ENCODE measurements at regions of chr11 and their contacts with region 1.

Region 1: DNA sequence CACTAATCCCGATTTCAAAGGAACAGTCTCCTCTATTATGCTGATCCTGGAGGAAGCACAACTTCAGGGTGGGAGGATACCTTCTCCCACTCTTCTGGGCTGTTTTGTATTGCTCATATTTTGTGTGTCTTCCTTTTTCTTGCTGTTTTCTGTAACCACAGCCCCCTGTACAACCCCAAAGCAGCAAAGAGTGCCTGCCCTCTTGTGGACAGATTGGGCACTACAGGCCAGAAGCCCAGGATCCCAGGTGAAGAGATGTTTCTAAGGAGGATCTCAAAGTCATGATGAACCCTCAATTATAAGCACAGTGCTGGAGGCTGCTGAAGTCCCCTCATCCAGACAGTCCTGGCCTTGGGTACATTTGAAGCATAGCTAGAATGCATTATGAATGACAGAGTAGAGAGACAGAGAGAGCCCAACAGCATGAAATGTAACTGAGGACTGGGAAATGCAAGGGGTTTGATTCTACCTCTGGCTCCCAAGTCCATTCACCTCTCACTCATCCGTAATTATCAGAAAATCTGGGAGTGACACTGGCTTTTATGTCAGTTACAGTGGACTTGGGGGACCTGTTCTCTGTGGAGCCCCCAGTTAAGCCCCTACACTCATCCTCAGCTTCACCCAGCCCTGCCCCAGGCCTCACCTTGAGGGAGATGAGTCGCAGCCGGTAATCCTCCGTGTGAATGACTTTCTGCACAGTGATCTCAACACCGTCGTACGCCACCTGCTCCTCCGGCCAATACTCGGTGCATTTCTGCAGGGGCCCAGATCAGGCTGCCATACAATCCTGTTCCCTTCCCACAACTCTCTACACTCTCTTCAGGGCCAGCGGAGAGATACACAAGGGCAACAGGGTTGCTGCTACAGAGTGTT is 6.2 kb upstream of the IGSF22 start:
- DNase-seq: peak; percentile 60 to 74
- H3K4me3 ChIP-seq: no peak overlapping the region
- H3K4me3 Mint-ChIP-seq: no peak overlapping the region
- H3K27ac Mint-ChIP-seq: no peak overlapping the region
- H3K4me1 ChIP-seq: 0 out of 2 replicates have a peak, but pooled peaks cover 17% of the 10 kb centered on the region
- H3K4me1 Mint-ChIP-seq: peaks cover 23% of the 10 kb centered on the region
- H3K27me3 ChIP-seq: no peaks in the 10 kb centered on the region
- H3K27me3 Mint-ChIP-seq: peaks cover 10% of the 10 kb centered on the region
- CTCF ChIP-seq: peak; percentile 91 to 98

Region 2: GRCh38 chr11:18757811-18758210 is 25.6 kb after region 1 on chr11:
- CTCF ChIA-PET with region 1: interaction called, 4 read pairs
- POLR2A ChIA-PET with region 1: no interaction called
- intact Hi-C with region 1: loop called (anchors 2 kb)
- DNase-seq: peak in 1 of 2 experiments; percentile 46
- H3K4me3 ChIP-seq: no peak overlapping the region
- H3K4me3 Mint-ChIP-seq: no peak overlapping the region
- H3K27ac Mint-ChIP-seq: no peak overlapping the region
- H3K4me1 ChIP-seq: peaks cover 5% of the 10 kb centered on the region; the same call in 1 of the 2 replicates
- H3K4me1 Mint-ChIP-seq: peaks cover 17% of the 10 kb centered on the region
- H3K27me3 ChIP-seq: no peaks in the 10 kb centered on the region
- H3K27me3 Mint-ChIP-seq: peaks cover 5% of the 10 kb centered on the region
- CTCF ChIP-seq: no peak

Region 3: GRCh38 chr11:18802381-18803257 is 70.4 kb after region 1 on chr11:
- CTCF ChIA-PET with region 1: no interaction called
- POLR2A ChIA-PET with region 1: no interaction called
- intact Hi-C with region 1: no loop called
- DNase-seq: peak; percentile 71 to 73
- H3K4me3 ChIP-seq: no peak overlapping the region
- H3K4me3 Mint-ChIP-seq: no peak overlapping the region
- H3K27ac Mint-ChIP-seq: no peak overlapping the region
- H3K4me1 ChIP-seq: no peaks in the 10 kb centered on the region; the same call in 1 of the 2 replicates
- H3K4me1 Mint-ChIP-seq: no peaks in the 10 kb centered on the region
- H3K27me3 ChIP-seq: no peaks in the 10 kb centered on the region
- H3K27me3 Mint-ChIP-seq: peaks cover 10% of the 10 kb centered on the region
- CTCF ChIP-seq: peak; percentile 61 to 75

Measured in Caco-2 (cell line).